Lower leg skin (tissue), 4 donors: ENCODE measurements at regions of chr1 and their contacts with region 1.

Region 1: GRCh38 chr1:202852163-202852904 is 36.6 kb downstream of the RABIF start:
- DNase-seq: no peak
- H3K4me3 ChIP-seq: no peak overlapping the region
- CTCF ChIP-seq: no peak
- POLR2A ChIP-seq: no peak

Region 2: GRCh38 chr1:202551683-202552082 is 300.7 kb before region 1 on chr1:
- intact Hi-C with region 1: no loop called
- DNase-seq: no peak
- H3K4me3 ChIP-seq: no peak overlapping the region
- CTCF ChIP-seq: no peak
- POLR2A ChIP-seq: no peak

Region 3: GRCh38 chr1:202807926-202808757 is 44.2 kb before region 1 on chr1 and contains the start of gene KDM5B:
- intact Hi-C with region 1: loop called (anchors 2 kb)
- DNase-seq: peak; percentile 44 to 90
- H3K4me3 ChIP-seq: peak within 1 kb of the TSS; percentile 96
- CTCF ChIP-seq: no peak
- POLR2A ChIP-seq: no peak
- total RNA-seq, gene KDM5B: 74.2 to 113 (median 89.2) TPM